Mammary epithelial cell (primary cell): ENCODE measurements at regions of chr12 and their contacts with region 1.

Region 1: GRCh38 chr12:108803428-108804105 is 53.8 kb downstream of the SSH1 start:
- DNase-seq: peak; percentile 68
- H3K4me3 ChIP-seq: no peak overlapping the region
- H3K27ac ChIP-seq: peak overlapping the region; percentile 67
- H3K4me1 ChIP-seq: peaks cover 36% of the 10 kb centered on the region
- H3K27me3 ChIP-seq: no peaks in the 10 kb centered on the region
- CTCF ChIP-seq: peak; percentile 97 to 98

Region 2: DNA sequence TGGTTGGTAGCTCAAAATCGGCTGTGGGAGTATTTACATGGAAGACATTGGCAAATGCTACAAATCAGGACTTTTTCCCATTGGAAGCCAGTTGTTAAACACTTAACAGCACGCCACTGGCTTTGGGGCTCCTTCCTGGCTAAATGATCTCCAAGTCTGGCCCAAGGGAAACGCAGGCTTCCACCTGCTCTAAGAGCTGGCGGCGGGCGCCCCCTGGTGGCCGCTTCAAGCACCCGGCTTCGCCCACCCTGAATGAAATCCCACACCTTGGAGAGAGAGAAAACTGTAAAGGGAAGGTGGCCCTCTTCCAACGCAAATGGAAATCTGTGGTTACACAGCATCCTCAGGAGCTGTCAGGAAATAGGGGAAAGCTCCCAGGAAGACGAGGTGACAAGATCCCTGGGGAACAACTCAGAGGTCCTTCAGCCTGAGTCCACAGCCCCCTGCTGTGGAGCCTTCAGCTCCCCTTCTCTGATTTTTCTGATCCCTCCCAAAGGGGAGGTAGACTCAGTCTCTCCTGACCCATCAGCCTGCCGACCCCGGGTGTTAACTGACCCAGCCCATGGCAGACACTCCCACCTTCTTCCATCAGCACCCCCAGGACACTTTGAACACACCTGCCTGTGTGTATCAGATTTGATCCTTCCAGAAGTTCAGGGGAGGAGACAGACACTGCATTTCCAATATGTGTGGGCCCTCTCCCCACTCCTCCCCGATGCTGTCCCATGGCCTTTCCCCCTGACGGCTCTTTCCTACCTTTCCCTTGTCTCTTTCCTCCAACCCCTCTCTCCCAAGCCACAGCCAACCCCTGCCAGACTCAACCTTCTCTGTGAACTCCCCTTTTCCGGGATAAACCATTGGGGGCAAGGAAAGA is 185.3 kb before region 1 on chr12:
- CTCF ChIA-PET with region 1: interaction called, 7 read pairs
- dilution Hi-C with region 1: no loop called
- in situ Hi-C with region 1: no loop called
- intact Hi-C with region 1: loop called (anchors 1 kb)
- DNase-seq: peak; percentile 57
- H3K4me3 ChIP-seq: no peak overlapping the region
- H3K27ac ChIP-seq: no peak overlapping the region
- H3K4me1 ChIP-seq: peaks cover 6% of the 10 kb centered on the region
- H3K27me3 ChIP-seq: no peaks in the 10 kb centered on the region
- CTCF ChIP-seq: peak; percentile 72 to 97

Region 3: DNA sequence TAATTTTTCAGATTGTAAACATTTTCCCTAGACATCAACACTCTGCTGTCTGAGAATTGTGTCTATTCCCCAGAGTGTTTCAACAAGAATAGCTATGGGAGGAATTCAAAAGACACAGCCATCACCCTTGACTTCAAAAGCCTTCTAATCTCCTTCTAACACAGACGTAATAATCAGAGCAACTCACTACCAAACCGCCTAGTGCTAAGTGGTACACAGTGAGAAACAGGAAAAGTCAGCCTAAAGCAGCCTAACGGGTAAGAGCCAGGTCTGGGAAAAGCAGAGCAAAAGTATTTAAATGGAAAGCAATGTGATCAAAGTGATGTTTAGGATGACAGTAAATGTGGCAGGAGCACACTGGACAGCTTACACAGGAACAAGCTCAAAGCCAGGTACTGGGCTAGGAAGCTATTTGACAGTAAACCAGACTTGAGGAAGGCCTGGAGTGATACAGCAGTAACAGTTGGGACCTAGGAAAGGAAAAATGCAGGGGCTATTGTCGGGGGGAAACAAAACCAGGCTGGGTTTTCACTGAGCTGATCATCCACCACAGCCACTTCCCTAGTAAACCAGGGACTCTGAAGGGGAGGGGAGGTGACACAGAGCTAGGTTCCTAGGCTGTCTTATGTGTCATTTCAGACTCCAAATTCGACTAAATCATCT is 101.7 kb before region 1 on chr12:
- CTCF ChIA-PET with region 1: no interaction called
- dilution Hi-C with region 1: loop called (anchors 5 kb)
- in situ Hi-C with region 1: no loop called
- intact Hi-C with region 1: no loop called
- DNase-seq: peak; percentile 45
- H3K4me3 ChIP-seq: peak overlapping the region in 2 of 3 experiments; percentile 25 to 28
- H3K27ac ChIP-seq: peak overlapping the region; percentile 96
- H3K4me1 ChIP-seq: peaks cover 42% of the 10 kb centered on the region
- H3K27me3 ChIP-seq: no peaks in the 10 kb centered on the region
- CTCF ChIP-seq: no peak

Region 4: GRCh38 chr12:108816652-108817335 is 13.2 kb after region 1 on chr12:
- CTCF ChIA-PET with region 1: interaction called, 4 read pairs
- dilution Hi-C with region 1: no loop called
- in situ Hi-C with region 1: no loop called
- intact Hi-C with region 1: loop called (anchors 1 kb)
- DNase-seq: no peak
- H3K4me3 ChIP-seq: no peak overlapping the region
- H3K27ac ChIP-seq: peak overlapping the region; percentile 78
- H3K4me1 ChIP-seq: peaks cover 34% of the 10 kb centered on the region
- H3K27me3 ChIP-seq: no peaks in the 10 kb centered on the region
- CTCF ChIP-seq: no peak

Region 5: DNA sequence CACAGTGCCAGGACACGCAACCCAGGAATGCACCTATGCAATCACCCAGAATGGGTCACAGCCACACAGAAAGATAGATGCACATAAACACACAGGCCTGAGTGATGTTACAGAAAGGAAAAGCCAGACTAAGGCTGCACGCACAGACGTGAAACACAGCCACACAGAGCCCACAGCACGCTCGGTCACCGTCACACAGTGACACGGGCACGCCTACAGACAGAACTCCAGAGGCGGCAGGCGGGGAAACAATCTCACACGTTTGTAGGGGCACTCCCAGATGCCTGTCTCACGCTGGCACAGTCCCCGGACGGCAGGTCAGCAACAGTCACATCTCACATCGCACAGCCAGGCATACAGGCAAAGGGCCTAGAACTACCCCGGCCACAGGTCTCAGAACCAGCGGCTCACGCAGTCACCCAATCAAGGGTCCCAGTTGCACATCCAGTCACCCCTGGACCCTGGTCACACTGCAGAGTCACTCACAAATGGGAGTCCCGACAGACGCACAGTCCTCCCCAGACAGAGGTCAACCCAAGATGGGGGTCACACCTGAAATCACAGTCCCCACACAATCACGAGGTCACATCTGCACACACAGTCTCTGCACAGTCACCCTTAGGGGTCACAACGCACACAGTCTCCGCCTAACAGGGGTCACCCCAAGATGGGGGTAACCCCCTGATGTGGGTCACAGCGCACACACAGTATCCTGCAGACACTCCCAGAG is 53.0 kb after region 1 on chr12:
- CTCF ChIA-PET with region 1: no interaction called
- dilution Hi-C with region 1: no loop called
- in situ Hi-C with region 1: no loop called
- intact Hi-C with region 1: loop called (anchors 1 kb)
- DNase-seq: peak; percentile 73
- H3K4me3 ChIP-seq: peak overlapping the region; percentile 83 to 94 (median 91)
- H3K27ac ChIP-seq: peak overlapping the region; percentile 97
- H3K4me1 ChIP-seq: peaks cover 28% of the 10 kb centered on the region
- H3K27me3 ChIP-seq: no peaks in the 10 kb centered on the region
- CTCF ChIP-seq: no peak

Region 6: DNA sequence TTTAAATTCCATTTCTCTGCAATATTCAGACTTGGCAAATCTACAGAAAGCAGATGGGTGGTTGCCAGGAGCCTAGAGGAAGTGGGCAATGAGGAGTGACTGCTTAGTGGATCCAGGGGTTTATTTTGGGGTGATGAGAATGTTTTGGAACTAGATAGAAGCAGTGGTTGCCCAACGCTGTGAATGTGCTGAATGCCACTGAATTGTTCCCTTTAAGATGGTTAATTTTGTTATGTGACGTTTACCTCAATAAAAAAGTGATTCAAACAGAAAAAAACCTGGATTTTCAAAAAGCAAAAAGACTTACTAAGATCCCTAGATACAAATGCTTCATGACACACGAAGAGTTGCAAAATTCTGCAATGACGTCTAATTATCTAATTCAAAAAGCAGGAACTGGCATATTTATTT is 110.6 kb after region 1 on chr12:
- CTCF ChIA-PET with region 1: no interaction called
- dilution Hi-C with region 1: loop called (anchors 5 kb)
- in situ Hi-C with region 1: no loop called
- intact Hi-C with region 1: no loop called
- DNase-seq: peak; percentile 10
- H3K4me3 ChIP-seq: no peak overlapping the region
- H3K27ac ChIP-seq: no peak overlapping the region
- H3K4me1 ChIP-seq: peaks cover 4% of the 10 kb centered on the region
- H3K27me3 ChIP-seq: no peaks in the 10 kb centered on the region
- CTCF ChIP-seq: no peak